Transverse colon (tissue), 4 donors: ENCODE measurements at regions of chr11 and their contacts with region 1.

Region 1: DNA sequence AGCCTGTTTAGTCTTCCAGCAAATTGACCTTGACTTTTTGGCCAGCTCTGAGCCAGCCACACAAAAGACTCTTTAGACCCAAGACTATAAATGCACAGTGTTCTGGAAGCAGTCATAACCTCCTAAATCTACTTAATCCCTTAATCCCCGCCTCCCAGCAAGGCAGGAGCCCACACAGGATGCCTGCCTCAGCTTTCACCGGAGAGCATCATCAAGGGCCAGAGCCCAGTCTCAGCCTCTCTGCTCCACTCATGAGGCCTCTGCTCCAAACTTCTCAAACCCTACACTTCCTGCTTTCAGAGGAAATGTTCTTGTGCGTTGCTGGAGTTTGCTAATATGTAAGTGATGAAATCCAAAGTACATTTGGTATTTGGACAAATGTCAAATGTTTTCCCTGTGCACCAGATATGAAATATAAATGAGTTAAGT is 57.9 kb upstream of the FSHB start:
- DNase-seq: no peak
- H3K4me3 ChIP-seq: no peak overlapping the region
- H3K27ac ChIP-seq: no peak overlapping the region
- H3K4me1 ChIP-seq: peaks cover 0 to 21% (median 3%) of the 10 kb centered on the region in 4 donors
- H3K27me3 ChIP-seq: no peaks in the 10 kb centered on the region
- CTCF ChIP-seq: no peak
- EP300 ChIP-seq: no peak
- POLR2A ChIP-seq: no peak

Region 2: DNA sequence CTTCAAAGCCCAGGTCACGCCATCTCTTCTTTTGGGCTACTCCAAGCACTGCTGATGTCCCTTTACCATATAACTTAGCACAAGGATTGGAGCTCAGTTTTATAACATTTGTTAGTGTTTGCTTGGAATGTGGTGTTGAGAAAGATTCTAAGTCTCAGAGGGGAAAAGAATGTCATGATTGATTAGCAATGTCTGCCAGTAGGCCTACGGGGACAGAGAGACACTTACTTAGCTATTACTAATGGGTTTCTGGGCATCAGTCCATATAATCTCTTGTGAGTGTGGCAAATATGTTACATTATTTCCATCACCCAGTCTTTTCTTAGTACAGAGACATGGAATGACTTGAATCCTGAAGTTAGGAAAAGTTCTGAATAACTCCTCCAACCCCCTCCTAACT is 17.5 kb before region 1 on chr11:
- in situ Hi-C with region 1: no loop called
- intact Hi-C with region 1: loop called (anchors 1 kb)
- DNase-seq: no peak
- H3K4me3 ChIP-seq: no peak overlapping the region
- H3K27ac ChIP-seq: no peak overlapping the region
- H3K4me1 ChIP-seq: no peaks in the 10 kb centered on the region
- H3K27me3 ChIP-seq: no peaks in the 10 kb centered on the region
- CTCF ChIP-seq: no peak
- EP300 ChIP-seq: no peak
- POLR2A ChIP-seq: no peak

Region 3: DNA sequence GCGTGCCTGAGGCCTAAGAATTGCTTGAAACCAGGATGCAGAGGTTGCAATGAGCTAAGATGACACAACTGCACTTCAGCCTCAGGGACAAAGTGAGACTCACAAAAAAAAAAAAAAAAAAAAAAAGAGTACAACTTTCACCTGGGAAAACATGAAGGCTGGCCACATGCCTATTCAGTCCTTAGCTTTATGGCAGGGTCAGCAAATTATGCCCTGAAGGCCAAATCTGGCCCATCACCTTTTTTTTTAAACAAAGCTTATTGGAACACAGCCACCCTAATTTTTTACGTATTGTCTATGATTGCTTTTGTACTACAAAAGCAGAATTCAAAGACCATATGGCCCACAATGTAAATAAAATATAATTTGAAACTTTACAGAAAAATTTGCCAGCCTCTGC is 66.1 kb after region 1 on chr11:
- in situ Hi-C with region 1: loop called in 1 of 4 experiments (anchors 10 kb)
- intact Hi-C with region 1: no loop called
- DNase-seq: no peak
- H3K4me3 ChIP-seq: no peak overlapping the region
- H3K27ac ChIP-seq: no peak overlapping the region
- H3K4me1 ChIP-seq: no peaks in the 10 kb centered on the region
- H3K27me3 ChIP-seq: no peaks in the 10 kb centered on the region
- CTCF ChIP-seq: no peak
- EP300 ChIP-seq: no peak
- POLR2A ChIP-seq: no peak

Region 4: GRCh38 chr11:30377347-30377746 is 204.4 kb after region 1 on chr11:
- in situ Hi-C with region 1: no loop called
- intact Hi-C with region 1: no loop called
- DNase-seq: no peak
- H3K4me3 ChIP-seq: no peak overlapping the region
- H3K27ac ChIP-seq: no peak overlapping the region
- H3K4me1 ChIP-seq: no peaks in the 10 kb centered on the region
- H3K27me3 ChIP-seq: no peaks in the 10 kb centered on the region
- CTCF ChIP-seq: no peak
- EP300 ChIP-seq: no peak
- POLR2A ChIP-seq: no peak